GM12878 (cell line): ENCODE measurements at regions of chr9 and their contacts with region 1.

Region 1: DNA sequence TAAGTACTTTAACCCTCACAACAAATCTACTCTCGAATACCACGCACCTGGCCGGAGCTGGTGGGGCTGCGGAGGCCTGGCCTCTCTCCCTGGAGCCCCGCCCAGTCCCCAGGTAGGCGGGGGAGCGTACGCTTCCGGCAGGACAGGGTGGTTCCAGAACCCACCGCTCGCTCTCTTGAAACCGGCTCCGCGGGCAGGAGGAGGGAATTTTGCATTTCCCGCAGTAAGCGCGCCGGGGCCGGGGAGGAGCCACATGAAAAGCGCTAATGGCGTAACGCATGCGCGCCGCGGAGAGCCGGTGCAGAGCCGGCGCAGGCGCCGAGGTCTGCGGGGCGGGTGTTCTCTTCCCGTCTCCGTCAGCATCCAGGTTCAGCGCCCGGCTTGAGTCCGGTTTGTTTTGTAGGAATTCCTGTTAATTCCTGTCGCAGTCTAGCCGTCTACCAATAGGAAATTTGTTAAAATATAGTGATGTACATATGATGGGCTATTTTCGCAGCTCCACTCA is 20.8 kb downstream of the CAVIN4 start:
- DNase-seq: no peak
- ATAC-seq: peak; percentile 87
- H3K4me3 ChIP-seq: peak overlapping the region; percentile 59; the same call in 1 of the 2 replicates
- H3K27ac ChIP-seq: no peak overlapping the region
- H3K4me1 ChIP-seq: no peaks in the 10 kb centered on the region
- H3K27me3 ChIP-seq: no peaks in the 10 kb centered on the region; a peak in 2 of 4 replicates
- CTCF ChIP-seq: no peak
- EP300 ChIP-seq: no peak
- POLR2A ChIP-seq: peak; percentile 47; the same call in 1 of the 2 replicates
- RAD21 ChIP-seq: no peak

Region 2: GRCh38 chr9:98848450-98849149 is 1750.1 kb before region 1 on chr9:
- CTCF ChIA-PET with region 1: interaction called, 3 read pairs
- POLR2A ChIA-PET with region 1: no interaction called
- RAD21 ChIA-PET with region 1: no interaction called
- SMC1A ChIA-PET with region 1: no interaction called
- in situ Hi-C with region 1: no loop called
- intact Hi-C with region 1: loop called (anchors 5 kb)
- DNase-seq: peak; percentile 23
- ATAC-seq: peak; percentile 100
- H3K4me3 ChIP-seq: no peak overlapping the region
- H3K27ac ChIP-seq: no peak overlapping the region
- H3K4me1 ChIP-seq: no peaks in the 10 kb centered on the region
- H3K27me3 ChIP-seq: no peaks in the 10 kb centered on the region; a peak in 1 of 4 replicates
- CTCF ChIP-seq: peak; percentile 90 to 96 (median 94)
- EP300 ChIP-seq: no peak
- POLR2A ChIP-seq: no peak
- RAD21 ChIP-seq: peak; percentile 86

Region 3: DNA sequence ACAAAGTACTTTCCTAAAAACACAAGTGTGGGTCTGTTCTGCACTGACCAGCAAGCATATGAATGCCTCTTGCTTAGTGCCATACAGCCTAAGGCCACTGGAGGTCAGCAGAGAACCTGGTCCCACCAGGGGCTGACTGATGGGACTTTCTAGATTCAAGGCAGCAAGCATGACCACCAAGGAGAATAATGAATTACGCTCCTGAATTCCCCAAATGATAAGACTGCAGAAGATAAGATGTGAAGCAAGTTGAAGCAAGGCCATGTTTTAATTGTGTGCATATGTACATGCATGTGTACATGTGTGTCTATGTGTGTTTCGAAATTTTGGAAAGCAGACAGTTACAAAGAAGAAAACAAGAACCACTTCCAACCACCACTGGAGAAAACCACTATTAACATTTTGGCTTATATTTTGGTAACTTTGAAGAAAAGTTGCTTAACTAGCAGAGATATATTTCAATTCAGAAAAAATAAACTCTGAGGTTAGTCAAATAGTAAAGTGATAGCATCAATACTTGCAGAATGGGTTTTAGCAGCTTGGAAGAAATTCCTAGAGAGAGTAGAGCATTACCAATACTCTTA is 570.4 kb before region 1 on chr9:
- CTCF ChIA-PET with region 1: interaction called, 4 read pairs
- POLR2A ChIA-PET with region 1: no interaction called
- RAD21 ChIA-PET with region 1: no interaction called
- SMC1A ChIA-PET with region 1: no interaction called
- in situ Hi-C with region 1: loop called (anchors 25 kb)
- intact Hi-C with region 1: loop called (anchors 5 kb)
- DNase-seq: peak; percentile 66
- ATAC-seq: peak; percentile 96
- H3K4me3 ChIP-seq: no peak overlapping the region
- H3K27ac ChIP-seq: peak overlapping the region; percentile 58; the same call in 1 of the 2 replicates
- H3K4me1 ChIP-seq: peaks cover 28% of the 10 kb centered on the region
- H3K27me3 ChIP-seq: no peaks in the 10 kb centered on the region
- CTCF ChIP-seq: peak; percentile 96 to 98 (median 98)
- EP300 ChIP-seq: no peak
- POLR2A ChIP-seq: no peak
- RAD21 ChIP-seq: peak; percentile 100

Region 4: GRCh38 chr9:100322954-100323536 is 275.6 kb before region 1 on chr9:
- CTCF ChIA-PET with region 1: interaction called, 6 read pairs
- POLR2A ChIA-PET with region 1: no interaction called
- RAD21 ChIA-PET with region 1: interaction called, 3 read pairs
- SMC1A ChIA-PET with region 1: interaction called, 3 read pairs
- in situ Hi-C with region 1: no loop called
- intact Hi-C with region 1: loop called (anchors 5 kb)
- DNase-seq: no peak
- ATAC-seq: peak; percentile 69
- H3K4me3 ChIP-seq: no peak overlapping the region
- H3K27ac ChIP-seq: no peak overlapping the region
- H3K4me1 ChIP-seq: no peaks in the 10 kb centered on the region
- H3K27me3 ChIP-seq: no peaks in the 10 kb centered on the region
- CTCF ChIP-seq: peak; percentile 55 to 74 (median 65)
- EP300 ChIP-seq: no peak
- POLR2A ChIP-seq: no peak
- RAD21 ChIP-seq: peak; percentile 65

Region 5: GRCh38 chr9:100505564-100506159 is 93.0 kb before region 1 on chr9:
- CTCF ChIA-PET with region 1: interaction called, 5 read pairs
- POLR2A ChIA-PET with region 1: no interaction called
- RAD21 ChIA-PET with region 1: interaction called, 4 read pairs
- SMC1A ChIA-PET with region 1: no interaction called
- in situ Hi-C with region 1: no loop called
- intact Hi-C with region 1: loop called (anchors 1 kb)
- DNase-seq: peak; percentile 16
- ATAC-seq: peak; percentile 82
- H3K4me3 ChIP-seq: no peak overlapping the region
- H3K27ac ChIP-seq: no peak overlapping the region
- H3K4me1 ChIP-seq: no peaks in the 10 kb centered on the region
- H3K27me3 ChIP-seq: no peaks in the 10 kb centered on the region
- CTCF ChIP-seq: peak; percentile 72 to 92 (median 74)
- EP300 ChIP-seq: no peak
- POLR2A ChIP-seq: no peak
- RAD21 ChIP-seq: peak; percentile 58

Region 6: DNA sequence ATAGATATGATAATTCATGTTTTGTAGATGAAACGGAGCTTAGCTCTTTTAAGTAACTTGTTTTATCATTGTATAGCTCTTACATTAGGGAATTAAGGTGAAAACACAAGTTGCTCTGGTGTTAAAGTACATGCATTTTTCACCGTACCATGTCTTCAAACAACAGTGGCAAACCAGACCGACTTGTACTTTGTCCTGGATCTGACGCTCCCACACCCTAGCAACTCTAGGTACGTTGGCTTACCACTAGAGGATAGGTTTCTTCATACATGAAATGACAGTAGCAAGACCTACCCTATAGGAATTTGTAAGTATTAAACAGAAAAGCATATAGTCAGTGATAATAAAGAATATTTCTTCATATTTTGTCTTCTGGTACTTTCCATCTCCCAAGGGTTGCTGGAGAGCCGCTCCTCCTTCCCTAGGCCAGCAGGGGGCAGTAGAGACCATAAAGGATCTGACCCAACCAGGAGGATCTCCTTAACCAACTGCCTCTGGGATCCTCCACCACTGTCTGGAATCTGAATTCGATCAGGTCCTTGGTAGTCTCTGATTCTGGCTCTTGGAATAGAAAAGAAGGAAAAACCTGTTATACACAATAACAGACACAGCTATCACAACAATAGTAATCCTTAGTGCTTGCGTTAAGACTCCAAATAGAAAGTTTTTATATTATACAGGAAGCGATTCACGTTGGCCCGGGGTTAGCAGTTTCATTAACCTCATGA is 115.8 kb after region 1 on chr9:
- CTCF ChIA-PET with region 1: interaction called, 4 read pairs
- POLR2A ChIA-PET with region 1: no interaction called
- RAD21 ChIA-PET with region 1: no interaction called
- SMC1A ChIA-PET with region 1: interaction called, 10 read pairs
- in situ Hi-C with region 1: no loop called
- intact Hi-C with region 1: no loop called
- DNase-seq: no peak
- ATAC-seq: peak; percentile 84
- H3K4me3 ChIP-seq: no peak overlapping the region
- H3K27ac ChIP-seq: no peak overlapping the region
- H3K4me1 ChIP-seq: no peaks in the 10 kb centered on the region
- H3K27me3 ChIP-seq: no peaks in the 10 kb centered on the region
- CTCF ChIP-seq: peak; percentile 78 to 84 (median 81)
- EP300 ChIP-seq: no peak
- POLR2A ChIP-seq: no peak
- RAD21 ChIP-seq: peak; percentile 71